Posterior cingulate gyrus (tissue), 11 donors: ENCODE measurements at regions of chr6 and their contacts with region 1.

Region 1: DNA sequence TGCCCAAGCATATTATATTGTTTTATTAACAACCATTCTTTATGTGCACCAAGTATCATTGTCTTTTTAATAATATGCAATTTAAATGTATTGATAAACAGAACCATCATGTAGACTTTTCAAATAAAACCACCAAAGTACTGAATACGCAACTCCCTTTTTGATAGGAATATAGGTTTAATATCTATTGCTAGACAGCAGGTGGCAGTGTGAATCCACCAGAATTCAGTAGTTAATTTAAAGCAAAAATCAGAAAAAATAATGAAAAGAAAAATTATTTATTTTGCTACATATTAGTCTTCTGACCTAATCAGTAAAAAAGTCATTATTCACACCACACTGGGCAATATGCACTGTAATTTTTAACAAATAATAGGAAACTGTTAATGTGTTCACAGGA is 143.7 kb downstream of the KLHL32 start:
- DNase-seq: peak in 1 of 10 donors; percentile 22

Region 2: DNA sequence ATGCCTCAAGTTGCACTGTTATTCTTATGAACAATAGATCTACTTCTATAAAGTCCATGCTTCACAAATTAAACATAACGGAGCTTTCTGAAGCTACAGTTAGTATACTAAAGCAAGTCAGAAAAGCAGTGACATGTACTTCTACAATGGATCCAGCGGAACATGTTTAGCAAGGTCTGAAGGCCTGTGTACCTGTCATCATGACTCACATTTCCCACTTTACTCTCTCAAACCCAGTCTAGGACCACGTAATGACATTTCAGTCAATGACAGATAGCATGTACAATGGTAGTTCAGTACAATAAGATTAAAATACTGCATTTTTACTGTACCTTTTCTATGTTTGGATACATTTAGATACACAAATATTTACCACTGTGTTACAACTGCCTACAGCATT is 82.7 kb after region 1 on chr6:
- intact Hi-C with region 1: no loop called
- DNase-seq: no peak

Region 3: DNA sequence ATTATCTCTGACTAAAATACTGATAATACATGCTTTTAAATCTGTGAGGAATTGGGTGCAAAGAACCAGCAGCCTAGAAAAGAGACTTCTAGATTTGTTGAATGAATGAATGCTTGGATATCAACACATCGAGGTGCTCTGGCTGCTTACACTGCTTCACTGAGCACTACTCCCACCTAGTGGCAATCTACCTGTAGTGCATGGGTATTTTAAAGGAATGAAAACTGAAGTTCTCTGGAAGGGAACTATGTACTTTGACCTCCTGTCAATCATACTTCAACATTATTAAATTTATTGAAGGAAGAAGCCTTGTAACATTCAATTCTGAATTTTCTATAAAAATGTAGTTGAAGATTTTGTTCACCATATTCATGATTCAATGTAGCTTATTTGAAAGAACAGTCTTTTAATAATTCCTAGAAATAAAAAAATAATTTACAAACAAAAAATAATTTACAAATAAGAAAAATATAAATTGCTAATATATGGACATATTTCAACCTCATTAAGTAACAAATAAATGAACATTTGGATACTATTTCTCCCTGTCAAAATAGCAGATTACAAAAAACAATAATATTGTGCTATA is 326.0 kb after region 1 on chr6:
- intact Hi-C with region 1: loop called (anchors 2 kb)
- DNase-seq: peak in 2 of 10 donors; percentile 18 to 40